CD4-positive, alpha-beta T cell (primary cell): ENCODE measurements at regions of chr1 and their contacts with region 1.

Region 1: GRCh38 chr1:23524716-23525401 is 6.2 kb downstream of the E2F2 start:
- DNase-seq: peak in 11 of 14 experiments; percentile 14 to 80 (median 30)
- ATAC-seq: peak; percentile 13
- H3K4me3 ChIP-seq: peak overlapping the region; percentile 10
- H3K4me3 Mint-ChIP-seq: peak overlapping the region; percentile 74
- H3K27ac ChIP-seq: peak overlapping the region; percentile 24 to 58
- H3K27ac Mint-ChIP-seq: peak overlapping the region; percentile 88
- H3K4me1 ChIP-seq: peaks cover 65% of the 10 kb centered on the region
- H3K4me1 Mint-ChIP-seq: peaks cover 73% of the 10 kb centered on the region
- H3K27me3 ChIP-seq: no peaks in the 10 kb centered on the region
- H3K27me3 Mint-ChIP-seq: no peaks in the 10 kb centered on the region
- CTCF ChIP-seq: no peak

Region 2: GRCh38 chr1:23507507-23507906 is 17.4 kb before region 1 on chr1:
- CTCF ChIA-PET with region 1: no interaction called
- POLR2A ChIA-PET with region 1: no interaction called
- intact Hi-C with region 1: no loop called
- DNase-seq: no peak
- ATAC-seq: no peak
- H3K4me3 ChIP-seq: no peak overlapping the region
- H3K4me3 Mint-ChIP-seq: no peak overlapping the region
- H3K27ac ChIP-seq: no peak overlapping the region
- H3K27ac Mint-ChIP-seq: no peak overlapping the region
- H3K4me1 ChIP-seq: no peaks in the 10 kb centered on the region
- H3K4me1 Mint-ChIP-seq: no peaks in the 10 kb centered on the region
- H3K27me3 ChIP-seq: no peaks in the 10 kb centered on the region
- H3K27me3 Mint-ChIP-seq: no peaks in the 10 kb centered on the region
- CTCF ChIP-seq: no peak

Region 3: GRCh38 chr1:23539698-23540266 is 14.9 kb after region 1 on chr1:
- CTCF ChIA-PET with region 1: interaction called, 63 read pairs
- POLR2A ChIA-PET with region 1: interaction called, 13 read pairs
- intact Hi-C with region 1: no loop called
- DNase-seq: peak; percentile 86 to 96 (median 90)
- ATAC-seq: peak; percentile 96
- H3K4me3 ChIP-seq: no peak overlapping the region
- H3K4me3 Mint-ChIP-seq: peak overlapping the region; percentile 11
- H3K27ac ChIP-seq: no peak overlapping the region
- H3K27ac Mint-ChIP-seq: peak overlapping the region; percentile 50
- H3K4me1 ChIP-seq: peaks cover 17% of the 10 kb centered on the region
- H3K4me1 Mint-ChIP-seq: peaks cover 18% of the 10 kb centered on the region
- H3K27me3 ChIP-seq: no peaks in the 10 kb centered on the region
- H3K27me3 Mint-ChIP-seq: no peaks in the 10 kb centered on the region
- CTCF ChIP-seq: peak; percentile 94